B cell (primary cell): ENCODE measurements at regions of chr1 and their contacts with region 1.

Region 1: GRCh38 chr1:237638555-237638954 is 252.2 kb downstream of the ZP4 start:
- DNase-seq: no peak
- ATAC-seq: no peak
- H3K4me3 ChIP-seq: no peak overlapping the region
- H3K4me3 Mint-ChIP-seq: no peak overlapping the region
- H3K27ac ChIP-seq: no peak overlapping the region
- H3K27ac Mint-ChIP-seq: no peak overlapping the region
- H3K4me1 ChIP-seq: no peaks in the 10 kb centered on the region
- H3K4me1 Mint-ChIP-seq: no peaks in the 10 kb centered on the region
- H3K27me3 ChIP-seq: no peaks in the 10 kb centered on the region
- H3K27me3 Mint-ChIP-seq: no peaks in the 10 kb centered on the region
- CTCF ChIP-seq: no peak

Region 2: DNA sequence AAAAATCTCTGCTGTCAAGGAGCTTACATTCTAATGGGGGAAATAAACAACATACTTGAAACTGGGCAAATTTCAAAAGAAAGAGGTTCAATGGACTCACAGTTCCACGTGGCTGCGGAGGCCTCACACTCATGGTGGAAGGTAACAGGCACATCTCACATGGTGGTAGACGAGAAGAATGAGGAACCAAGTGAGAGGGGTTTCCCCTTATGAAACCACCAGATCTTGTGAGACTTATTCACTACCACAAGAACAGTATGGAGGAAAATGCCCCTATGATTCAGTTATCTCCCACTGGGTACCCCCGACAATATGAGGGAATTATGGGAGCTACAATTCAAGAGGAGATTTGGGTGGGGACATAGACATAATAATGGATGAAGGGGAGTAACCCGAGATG is 25.8 kb after region 1 on chr1:
- CTCF ChIA-PET with region 1: no interaction called
- POLR2A ChIA-PET with region 1: no interaction called
- intact Hi-C with region 1: loop called (anchors 1 kb)
- DNase-seq: no peak
- ATAC-seq: no peak
- H3K4me3 ChIP-seq: no peak overlapping the region
- H3K4me3 Mint-ChIP-seq: no peak overlapping the region
- H3K27ac ChIP-seq: no peak overlapping the region
- H3K27ac Mint-ChIP-seq: no peak overlapping the region
- H3K4me1 ChIP-seq: no peaks in the 10 kb centered on the region
- H3K4me1 Mint-ChIP-seq: no peaks in the 10 kb centered on the region
- H3K27me3 ChIP-seq: no peaks in the 10 kb centered on the region
- H3K27me3 Mint-ChIP-seq: no peaks in the 10 kb centered on the region
- CTCF ChIP-seq: no peak